Dendritic cell treated with granulocyte-macrophage colony-stimulating factor and Interleukin-4, amounts not matched to agents 40 ng/mL and 50 ng/mL, for 4 days (primary cell): ENCODE measurements at regions of chr7 and their contacts with region 1.

Region 1: GRCh38 chr7:139767561-139767982 is 10.2 kb downstream of the HIPK2 start:
- H3K4me3 Mint-ChIP-seq: no peak overlapping the region
- H3K27ac Mint-ChIP-seq: no peak overlapping the region
- H3K4me1 Mint-ChIP-seq: peaks cover 68% of the 10 kb centered on the region
- H3K27me3 Mint-ChIP-seq: no peaks in the 10 kb centered on the region

Region 2: GRCh38 chr7:139731802-139732470 is 35.6 kb before region 1 on chr7:
- intact Hi-C with region 1: loop called (anchors 5 kb)
- H3K4me3 Mint-ChIP-seq: no peak overlapping the region
- H3K27ac Mint-ChIP-seq: peak overlapping the region; percentile 28
- H3K4me1 Mint-ChIP-seq: peaks cover 45% of the 10 kb centered on the region
- H3K27me3 Mint-ChIP-seq: no peaks in the 10 kb centered on the region

Region 3: DNA sequence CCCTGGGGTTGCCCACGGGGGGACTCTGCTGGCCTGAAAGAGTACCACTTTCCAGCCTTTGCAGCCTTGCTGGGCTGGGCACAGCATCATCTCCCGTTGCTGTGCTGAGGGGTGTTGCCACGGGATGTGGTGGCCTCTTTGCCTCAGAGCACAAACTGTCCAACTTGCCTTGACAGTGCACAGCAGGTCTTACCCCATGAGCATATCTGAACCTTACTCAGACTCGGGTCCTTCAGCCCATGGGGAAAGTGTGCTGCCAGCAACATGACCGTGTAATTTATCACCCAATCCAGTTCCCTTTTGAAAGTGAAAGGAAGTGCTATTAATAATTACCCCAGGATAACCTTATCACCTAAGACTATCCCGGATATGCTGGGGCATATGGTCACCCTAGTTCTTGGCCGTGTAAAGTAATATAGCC is 108.3 kb after region 1 on chr7:
- intact Hi-C with region 1: no loop called
- H3K4me3 Mint-ChIP-seq: no peak overlapping the region
- H3K27ac Mint-ChIP-seq: no peak overlapping the region
- H3K4me1 Mint-ChIP-seq: peaks cover 64% of the 10 kb centered on the region
- H3K27me3 Mint-ChIP-seq: no peaks in the 10 kb centered on the region

Region 4: DNA sequence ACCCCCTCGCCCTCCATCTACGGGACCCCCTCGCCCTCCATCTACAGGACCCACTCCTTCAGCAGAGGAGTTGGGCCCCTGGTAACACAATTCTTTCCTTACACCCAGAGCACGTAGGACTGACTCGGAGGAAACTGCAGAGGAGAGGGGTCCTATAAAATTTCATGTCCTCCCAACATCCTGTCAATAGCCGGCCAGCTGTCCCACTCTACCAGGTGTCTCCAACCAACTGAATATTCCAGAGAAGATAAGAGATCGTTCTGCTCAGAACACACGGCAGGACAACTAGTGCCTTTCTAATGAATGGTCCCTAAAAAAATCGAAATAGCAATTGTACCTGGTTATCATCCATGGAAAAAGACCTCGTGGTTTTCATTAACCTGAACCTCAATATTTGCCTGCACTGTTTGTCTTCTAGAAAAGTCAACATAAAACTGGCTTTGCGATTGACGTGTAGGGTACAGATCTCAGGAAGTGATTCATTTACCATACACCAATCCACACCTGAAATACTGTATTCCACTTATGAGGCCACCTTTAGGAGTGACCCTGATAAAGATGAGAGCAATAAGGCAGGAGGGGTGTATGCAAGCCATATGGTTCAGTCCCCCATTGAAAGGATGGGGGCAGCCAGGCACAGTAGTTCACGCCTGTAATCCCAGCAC is 183.4 kb after region 1 on chr7:
- intact Hi-C with region 1: no loop called
- H3K4me3 Mint-ChIP-seq: no peak overlapping the region
- H3K27ac Mint-ChIP-seq: no peak overlapping the region
- H3K4me1 Mint-ChIP-seq: peaks cover 7% of the 10 kb centered on the region
- H3K27me3 Mint-ChIP-seq: no peaks in the 10 kb centered on the region